ENCODE measurements at regions of chr16 and their contacts with region 1.

Region 1: DNA sequence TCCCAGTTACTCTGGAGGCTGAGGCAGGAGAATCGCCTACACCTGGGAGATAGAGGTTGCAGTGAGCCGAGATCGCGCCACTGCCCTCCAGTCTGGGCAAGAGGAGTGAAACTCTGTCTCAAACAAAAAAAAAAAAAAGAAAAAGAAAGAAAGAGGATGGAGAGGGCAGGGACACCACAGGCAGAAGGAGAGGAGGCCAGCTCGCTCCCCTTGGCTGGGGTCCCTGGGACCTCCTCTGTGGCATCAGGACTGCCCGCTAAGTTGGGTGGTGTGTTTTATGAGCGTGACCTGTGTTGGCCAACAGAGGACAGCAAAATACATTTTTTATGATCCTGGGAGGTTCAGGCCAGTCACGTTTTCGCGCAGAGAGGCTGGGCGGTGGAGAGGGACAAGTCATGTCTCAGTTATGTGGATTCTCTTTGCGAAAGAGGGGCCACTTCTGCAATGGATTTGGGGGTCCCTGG is 229.6 kb downstream of the MRTFB start:
- DNase-seq: peak; percentile 85
- H3K4me3 Mint-ChIP-seq: peak overlapping the region; percentile 81
- H3K27ac Mint-ChIP-seq: peak overlapping the region; percentile 71
- H3K4me1 Mint-ChIP-seq: peaks cover 22% of the 10 kb centered on the region
- H3K27me3 Mint-ChIP-seq: no peaks in the 10 kb centered on the region
- CTCF ChIP-seq: peak; percentile 76

Region 2: GRCh38 chr16:14399378-14400284 is 98.9 kb after region 1 on chr16:
- CTCF ChIA-PET with region 1: no interaction called
- POLR2A ChIA-PET with region 1: no interaction called
- intact Hi-C with region 1: loop called (anchors 5 kb)
- DNase-seq: peak; percentile 66
- H3K4me3 Mint-ChIP-seq: peak overlapping the region; percentile 55
- H3K27ac Mint-ChIP-seq: no peak overlapping the region
- H3K4me1 Mint-ChIP-seq: peaks cover 11% of the 10 kb centered on the region
- H3K27me3 Mint-ChIP-seq: no peaks in the 10 kb centered on the region
- CTCF ChIP-seq: no peak

Region 3: DNA sequence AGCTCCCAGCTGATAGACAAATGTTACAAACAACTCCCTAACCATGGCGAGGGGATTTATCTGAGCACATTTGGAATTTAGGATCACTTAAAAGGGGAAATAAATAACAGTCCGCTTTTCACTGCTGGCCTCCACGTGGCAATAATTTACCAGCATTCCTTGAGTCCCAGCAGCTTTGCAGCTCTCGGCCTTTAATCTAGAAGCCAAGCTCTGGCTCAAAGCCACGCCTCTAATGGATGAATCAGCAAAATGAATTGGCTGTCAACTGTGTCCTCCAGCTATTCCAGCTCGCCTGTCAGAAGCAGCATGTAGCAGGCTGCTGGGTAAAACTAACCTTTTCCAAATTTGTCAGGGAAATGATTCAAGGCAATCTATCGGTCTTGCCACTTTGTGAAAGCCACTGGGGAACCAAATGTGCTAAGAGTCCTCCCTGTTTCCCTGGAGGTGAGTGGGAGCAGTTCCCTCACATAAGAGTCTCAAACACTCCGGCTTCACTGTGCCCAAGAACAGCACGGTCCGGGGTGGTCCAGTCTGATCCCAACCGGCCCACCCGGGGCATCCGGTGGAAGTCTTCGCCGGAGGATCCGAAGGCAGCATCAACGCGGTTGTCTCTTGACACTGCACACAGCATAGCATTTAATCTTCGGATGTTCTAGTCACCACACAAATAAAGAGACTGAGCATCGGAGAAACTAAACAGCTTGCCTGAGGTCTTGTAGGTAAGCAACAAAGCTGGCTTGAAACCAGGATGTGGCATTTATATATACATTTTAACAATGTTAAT is 186.0 kb after region 1 on chr16:
- CTCF ChIA-PET with region 1: interaction called, 4 read pairs
- POLR2A ChIA-PET with region 1: interaction called, 10 read pairs
- intact Hi-C with region 1: no loop called
- DNase-seq: peak; percentile 96
- H3K4me3 Mint-ChIP-seq: peak overlapping the region; percentile 68
- H3K27ac Mint-ChIP-seq: peak overlapping the region; percentile 67
- H3K4me1 Mint-ChIP-seq: peaks cover 11% of the 10 kb centered on the region
- H3K27me3 Mint-ChIP-seq: no peaks in the 10 kb centered on the region
- CTCF ChIP-seq: no peak

Region 4: DNA sequence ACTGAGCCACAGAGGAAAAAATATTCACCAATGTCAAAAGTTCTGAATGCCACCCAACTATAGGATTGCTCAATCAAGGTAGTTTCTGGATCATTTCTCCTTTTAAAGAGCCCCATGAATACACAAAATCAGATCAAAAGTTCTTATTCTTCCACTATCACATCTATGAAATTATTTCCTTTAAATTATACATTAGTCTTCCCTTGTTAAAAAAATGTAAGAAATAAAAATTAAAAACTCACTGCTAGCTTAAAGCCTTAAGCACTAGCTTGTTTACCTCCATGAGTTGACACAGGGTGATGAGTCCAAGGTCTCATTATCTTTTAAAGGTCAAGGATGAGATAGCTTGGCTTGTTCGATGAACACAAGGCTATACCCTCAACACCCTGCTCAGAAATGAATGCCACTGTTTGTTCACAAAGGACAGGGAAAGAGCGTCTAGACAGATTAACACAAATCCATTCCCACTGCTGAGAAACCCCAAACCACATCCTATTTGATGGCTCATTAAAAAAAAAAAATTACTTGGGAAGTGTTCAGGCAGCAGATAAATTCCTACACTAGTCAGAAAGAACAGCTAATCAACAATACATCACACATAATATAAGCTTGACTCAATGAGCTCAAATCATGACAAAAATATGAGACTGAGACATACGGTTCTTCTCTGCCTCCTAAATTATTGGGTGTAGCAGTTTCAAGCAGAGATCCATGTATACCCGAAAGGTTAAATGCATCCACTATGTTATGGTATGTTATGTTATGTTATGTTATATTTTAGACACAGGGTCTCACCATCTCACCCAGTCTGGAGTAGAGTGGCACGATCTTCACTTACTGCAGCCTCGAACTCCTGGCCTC is 210.4 kb after region 1 on chr16:
- CTCF ChIA-PET with region 1: interaction called, 13 read pairs
- POLR2A ChIA-PET with region 1: interaction called, 5 read pairs
- intact Hi-C with region 1: no loop called
- DNase-seq: no peak
- H3K4me3 Mint-ChIP-seq: peak overlapping the region; percentile 19
- H3K27ac Mint-ChIP-seq: peak overlapping the region; percentile 91
- H3K4me1 Mint-ChIP-seq: peaks cover 34% of the 10 kb centered on the region
- H3K27me3 Mint-ChIP-seq: no peaks in the 10 kb centered on the region
- CTCF ChIP-seq: no peak

Measured in MCF 10A (cell line).